ENCODE measurements at regions of chr1 and their contacts with region 1.

Region 1: GRCh38 chr1:235866913-235867845 is 473 bp upstream of the LYST start:
- DNase-seq: peak; percentile 100
- H3K4me3 Mint-ChIP-seq: peak overlapping the region; percentile 99
- H3K27ac Mint-ChIP-seq: peak overlapping the region; percentile 100
- H3K4me1 Mint-ChIP-seq: peaks cover 52% of the 10 kb centered on the region
- H3K27me3 Mint-ChIP-seq: no peaks in the 10 kb centered on the region

Region 2: DNA sequence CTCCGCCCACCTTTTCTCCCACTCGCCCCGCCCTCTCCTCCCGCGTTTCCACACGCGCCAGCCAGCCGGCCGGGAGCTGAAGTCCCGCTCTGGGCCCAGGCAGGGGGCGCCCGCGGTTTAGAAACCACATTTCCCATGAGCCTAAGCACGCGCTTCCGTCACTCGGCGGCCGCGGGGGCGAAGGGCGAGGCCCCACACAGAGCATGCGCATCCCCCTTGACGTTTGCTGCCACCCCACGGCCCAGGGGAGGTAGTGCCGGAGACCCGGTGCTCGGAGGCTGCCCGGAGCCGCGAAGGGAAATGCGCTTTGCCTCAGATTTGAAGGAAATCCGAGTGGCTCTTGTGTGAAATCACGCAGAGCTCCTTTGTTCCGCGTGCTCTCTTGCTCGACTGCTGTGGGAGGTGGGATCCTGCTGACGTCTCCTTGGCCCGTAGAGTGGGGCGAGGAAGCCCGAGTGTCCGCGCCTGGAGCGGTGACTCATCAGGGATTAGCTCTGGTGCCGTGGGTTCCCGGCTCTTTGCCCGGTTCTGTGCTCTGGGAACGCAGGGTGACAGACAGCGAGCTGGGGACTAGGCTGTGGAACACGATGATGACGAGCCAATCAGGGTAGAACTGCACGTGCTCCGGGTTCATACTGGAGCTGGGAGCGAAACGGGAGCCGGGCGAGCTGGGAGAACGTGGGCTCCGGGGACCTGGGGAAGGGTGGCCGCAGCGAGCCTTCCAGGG is 362.5 kb before region 1 on chr1:
- intact Hi-C with region 1: loop called (anchors 2 kb)
- DNase-seq: peak; percentile 99
- H3K4me3 Mint-ChIP-seq: peak overlapping the region; percentile 95
- H3K27ac Mint-ChIP-seq: peak overlapping the region; percentile 97
- H3K4me1 Mint-ChIP-seq: peaks cover 25% of the 10 kb centered on the region
- H3K27me3 Mint-ChIP-seq: peaks cover 6% of the 10 kb centered on the region

Region 3: DNA sequence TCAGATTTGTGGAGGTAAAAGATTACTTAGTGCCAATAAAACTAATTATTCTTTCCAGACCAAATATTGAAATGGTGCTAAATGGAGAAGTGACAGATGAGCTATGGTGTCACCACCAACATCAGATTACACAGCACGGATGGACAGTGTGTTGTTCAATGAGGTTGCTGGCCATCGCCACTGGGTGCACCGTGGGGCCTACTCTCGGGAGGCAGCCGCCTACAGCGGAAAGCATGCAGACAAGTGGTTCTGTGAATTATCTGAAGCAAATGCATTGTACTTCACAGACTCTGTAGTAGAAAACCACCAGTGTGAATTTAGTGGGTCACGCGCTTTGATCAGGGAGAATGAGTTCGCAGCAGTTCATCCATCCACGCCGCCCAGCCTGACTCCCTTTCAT is 259.9 kb before region 1 on chr1:
- intact Hi-C with region 1: no loop called
- DNase-seq: no peak
- H3K4me3 Mint-ChIP-seq: no peak overlapping the region
- H3K27ac Mint-ChIP-seq: no peak overlapping the region
- H3K4me1 Mint-ChIP-seq: no peaks in the 10 kb centered on the region
- H3K27me3 Mint-ChIP-seq: peaks cover 1% of the 10 kb centered on the region

Region 4: GRCh38 chr1:235763962-235764361 is 103.2 kb before region 1 on chr1:
- intact Hi-C with region 1: loop called (anchors 2 kb)
- DNase-seq: peak; percentile 69
- H3K4me3 Mint-ChIP-seq: no peak overlapping the region
- H3K27ac Mint-ChIP-seq: no peak overlapping the region
- H3K4me1 Mint-ChIP-seq: peaks cover 10% of the 10 kb centered on the region
- H3K27me3 Mint-ChIP-seq: no peaks in the 10 kb centered on the region

Region 5: GRCh38 chr1:235878082-235878811 is 11.1 kb after region 1 on chr1:
- intact Hi-C with region 1: loop called (anchors 1 kb)
- DNase-seq: peak; percentile 58
- H3K4me3 Mint-ChIP-seq: peak overlapping the region; percentile 15
- H3K27ac Mint-ChIP-seq: peak overlapping the region; percentile 92
- H3K4me1 Mint-ChIP-seq: peaks cover 71% of the 10 kb centered on the region
- H3K27me3 Mint-ChIP-seq: no peaks in the 10 kb centered on the region

Region 6: DNA sequence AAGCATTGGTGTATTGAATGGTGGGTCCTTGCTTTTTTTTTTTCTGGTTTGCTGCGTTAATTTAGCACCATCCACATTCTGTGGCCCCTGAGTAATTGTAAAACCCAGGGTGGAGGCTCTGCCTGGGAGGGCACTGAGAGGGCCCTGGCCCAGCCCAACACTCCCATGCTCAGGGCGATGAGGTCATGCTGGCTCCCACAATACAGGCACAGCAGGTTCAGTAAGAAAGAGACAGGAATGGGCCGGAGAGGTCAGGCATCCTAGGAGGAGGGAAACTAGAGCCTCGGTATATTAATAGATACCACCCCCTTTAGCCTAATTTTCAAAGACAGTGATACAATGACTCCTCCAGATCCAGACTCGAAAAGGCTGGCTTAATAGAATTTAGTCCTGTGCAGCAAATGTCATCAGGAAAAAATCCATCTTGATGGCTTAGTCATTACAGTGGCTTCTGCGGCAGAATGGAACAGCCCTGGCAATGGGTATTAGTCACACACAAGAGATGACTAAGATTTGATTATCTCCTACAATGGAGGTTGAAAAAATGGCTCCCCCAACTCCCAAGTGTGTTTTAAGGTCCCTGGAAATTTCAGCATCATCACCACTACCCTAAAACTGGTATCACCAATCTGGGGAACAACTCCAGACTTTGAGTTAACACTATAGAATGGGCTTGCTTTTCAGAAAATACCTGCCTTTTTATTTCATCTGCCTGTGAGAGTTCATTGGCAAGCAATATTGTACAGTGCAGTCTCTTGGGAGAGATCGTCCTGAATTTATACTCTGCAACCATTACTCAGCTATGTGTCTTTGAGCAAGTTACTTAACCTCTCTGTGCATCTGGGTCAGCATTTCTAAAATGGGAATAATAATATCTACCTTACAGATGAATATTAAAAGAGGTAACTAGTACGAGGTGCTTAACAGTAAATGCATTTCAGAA is 43.4 kb after region 1 on chr1:
- intact Hi-C with region 1: loop called (anchors 1 kb)
- DNase-seq: peak; percentile 69
- H3K4me3 Mint-ChIP-seq: peak overlapping the region; percentile 18
- H3K27ac Mint-ChIP-seq: peak overlapping the region; percentile 84
- H3K4me1 Mint-ChIP-seq: peaks cover 33% of the 10 kb centered on the region
- H3K27me3 Mint-ChIP-seq: peaks cover 4% of the 10 kb centered on the region

Region 7: GRCh38 chr1:235954306-235955283 is 87.4 kb after region 1 on chr1:
- intact Hi-C with region 1: loop called (anchors 2 kb)
- DNase-seq: peak; percentile 78
- H3K4me3 Mint-ChIP-seq: no peak overlapping the region
- H3K27ac Mint-ChIP-seq: no peak overlapping the region
- H3K4me1 Mint-ChIP-seq: peaks cover 37% of the 10 kb centered on the region
- H3K27me3 Mint-ChIP-seq: peaks cover 2% of the 10 kb centered on the region

Region 8: DNA sequence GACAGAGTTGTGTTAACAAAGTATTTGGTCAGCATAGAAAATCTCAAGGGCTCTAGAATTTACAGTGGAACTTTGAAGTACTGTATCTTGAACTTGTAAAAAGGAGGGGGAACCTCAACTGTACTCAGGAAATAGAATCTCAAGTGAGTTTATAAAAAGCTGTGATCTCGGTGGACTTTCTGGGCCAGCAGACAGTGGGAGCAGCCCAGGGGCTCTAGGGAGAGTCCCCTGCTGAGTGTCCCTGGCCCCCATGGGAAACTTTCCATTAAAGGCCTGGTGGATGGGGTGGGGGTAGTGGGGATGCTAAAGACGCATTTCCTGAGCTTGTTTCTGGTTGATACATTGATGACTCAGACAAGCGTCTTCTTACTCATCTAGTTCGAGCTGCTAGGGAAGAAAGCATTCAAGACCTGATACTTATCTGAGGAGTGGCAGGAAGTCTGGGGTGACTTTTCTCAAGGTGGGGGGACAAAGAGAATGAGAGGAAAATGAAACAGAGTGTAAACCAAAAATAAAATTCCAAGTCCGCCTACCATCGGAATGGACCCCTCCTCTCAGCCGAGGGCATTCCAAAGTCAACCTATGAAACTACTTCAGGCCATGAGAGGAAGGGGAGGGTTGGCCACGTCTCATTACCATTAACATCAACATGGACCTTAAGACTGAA is 132.2 kb after region 1 on chr1:
- intact Hi-C with region 1: loop called (anchors 1 kb)
- DNase-seq: peak; percentile 93
- H3K4me3 Mint-ChIP-seq: peak overlapping the region; percentile 75
- H3K27ac Mint-ChIP-seq: peak overlapping the region; percentile 97
- H3K4me1 Mint-ChIP-seq: peaks cover 62% of the 10 kb centered on the region
- H3K27me3 Mint-ChIP-seq: no peaks in the 10 kb centered on the region